ENCODE measurements at regions of chrX and their contacts with region 1.

Region 1: GRCh38 chrX:46376246-46376885 is 168.9 kb downstream of the ZNF674 start:
- DNase-seq: peak; percentile 1
- H3K4me3 Mint-ChIP-seq: no peak overlapping the region
- H3K27ac Mint-ChIP-seq: no peak overlapping the region
- H3K4me1 Mint-ChIP-seq: peaks cover 7% of the 10 kb centered on the region
- H3K27me3 Mint-ChIP-seq: no peaks in the 10 kb centered on the region

Region 2: GRCh38 chrX:45322382-45322781 is 1054.0 kb before region 1 on chrX:
- intact Hi-C with region 1: loop called (anchors 5 kb)
- DNase-seq: no peak
- H3K4me3 Mint-ChIP-seq: no peak overlapping the region
- H3K27ac Mint-ChIP-seq: no peak overlapping the region
- H3K4me1 Mint-ChIP-seq: no peaks in the 10 kb centered on the region
- H3K27me3 Mint-ChIP-seq: peaks cover under 1% of the 10 kb centered on the region

Region 3: DNA sequence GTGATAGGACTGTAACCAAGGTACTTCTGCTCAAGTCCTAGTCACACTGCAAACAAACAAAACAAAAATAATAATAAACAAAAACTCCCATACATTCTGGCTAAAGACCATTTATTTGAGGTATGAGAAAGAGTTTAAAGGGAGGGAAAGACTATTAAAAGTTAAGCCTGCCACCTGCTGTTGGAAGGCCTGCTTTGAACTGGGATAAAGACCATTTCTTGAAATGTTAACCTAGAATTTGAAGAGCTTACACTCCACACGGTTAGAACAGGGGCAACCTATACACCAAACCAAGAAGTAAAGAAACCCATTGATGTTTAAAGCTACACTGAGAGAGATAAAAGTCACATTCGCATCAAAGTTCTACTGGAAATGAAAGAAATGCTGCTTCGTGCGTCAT is 627.0 kb before region 1 on chrX:
- intact Hi-C with region 1: loop called (anchors 2 kb)
- DNase-seq: no peak
- H3K4me3 Mint-ChIP-seq: peak overlapping the region; percentile 42
- H3K27ac Mint-ChIP-seq: peak overlapping the region; percentile 83
- H3K4me1 Mint-ChIP-seq: peaks cover 38% of the 10 kb centered on the region
- H3K27me3 Mint-ChIP-seq: no peaks in the 10 kb centered on the region

Region 4: DNA sequence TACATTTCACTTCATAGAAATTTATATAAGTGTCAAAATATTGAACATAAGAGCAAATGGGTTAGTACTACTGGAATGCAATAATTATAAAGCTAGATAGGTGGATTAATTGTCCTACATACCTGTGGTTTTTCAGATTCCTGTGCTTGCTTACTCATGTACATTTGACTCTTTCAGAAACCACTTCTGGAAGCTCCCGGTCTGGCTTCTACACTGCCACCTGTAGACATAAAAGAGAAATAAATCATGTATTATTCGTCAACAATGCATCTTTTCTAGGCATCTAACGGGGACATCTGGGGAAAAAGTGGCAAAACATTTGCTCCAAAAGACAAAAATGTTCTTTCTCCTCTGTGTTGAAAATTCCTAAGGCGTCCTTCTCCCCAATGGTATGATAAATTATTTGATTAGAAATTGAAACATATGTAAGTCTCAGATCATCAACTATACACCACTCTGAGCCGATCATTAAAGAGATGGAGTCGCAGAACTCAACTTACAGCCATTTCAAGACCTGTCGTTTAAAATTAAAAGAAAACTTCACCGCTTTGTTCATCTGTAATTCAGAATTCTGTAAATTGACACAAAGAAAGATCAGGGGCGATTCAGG is 527.0 kb before region 1 on chrX:
- intact Hi-C with region 1: loop called (anchors 2 kb)
- DNase-seq: no peak
- H3K4me3 Mint-ChIP-seq: peak overlapping the region; percentile 94
- H3K27ac Mint-ChIP-seq: peak overlapping the region; percentile 94
- H3K4me1 Mint-ChIP-seq: peaks cover 34% of the 10 kb centered on the region
- H3K27me3 Mint-ChIP-seq: no peaks in the 10 kb centered on the region

Region 5: DNA sequence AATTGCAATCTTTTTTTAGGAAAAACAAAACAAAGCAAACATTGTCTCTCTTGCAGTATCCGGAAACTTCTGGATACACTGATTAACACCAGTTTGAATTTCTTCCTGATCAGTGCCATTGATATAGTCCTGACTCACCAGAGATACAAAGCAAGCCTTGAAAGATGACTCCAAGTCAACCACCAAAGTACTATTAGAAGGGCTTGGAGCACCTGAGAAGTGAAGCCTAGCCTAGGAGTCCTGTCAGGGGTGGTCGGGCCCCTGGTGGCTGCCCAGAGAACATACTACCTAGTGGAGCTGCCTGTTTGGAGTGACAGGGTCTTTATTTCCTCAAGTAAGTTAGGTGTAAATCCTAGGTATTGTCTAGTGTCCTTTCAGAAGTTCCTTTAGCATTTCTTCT is 424.3 kb before region 1 on chrX:
- intact Hi-C with region 1: no loop called
- DNase-seq: no peak
- H3K4me3 Mint-ChIP-seq: no peak overlapping the region
- H3K27ac Mint-ChIP-seq: no peak overlapping the region
- H3K4me1 Mint-ChIP-seq: no peaks in the 10 kb centered on the region
- H3K27me3 Mint-ChIP-seq: no peaks in the 10 kb centered on the region

Region 6: DNA sequence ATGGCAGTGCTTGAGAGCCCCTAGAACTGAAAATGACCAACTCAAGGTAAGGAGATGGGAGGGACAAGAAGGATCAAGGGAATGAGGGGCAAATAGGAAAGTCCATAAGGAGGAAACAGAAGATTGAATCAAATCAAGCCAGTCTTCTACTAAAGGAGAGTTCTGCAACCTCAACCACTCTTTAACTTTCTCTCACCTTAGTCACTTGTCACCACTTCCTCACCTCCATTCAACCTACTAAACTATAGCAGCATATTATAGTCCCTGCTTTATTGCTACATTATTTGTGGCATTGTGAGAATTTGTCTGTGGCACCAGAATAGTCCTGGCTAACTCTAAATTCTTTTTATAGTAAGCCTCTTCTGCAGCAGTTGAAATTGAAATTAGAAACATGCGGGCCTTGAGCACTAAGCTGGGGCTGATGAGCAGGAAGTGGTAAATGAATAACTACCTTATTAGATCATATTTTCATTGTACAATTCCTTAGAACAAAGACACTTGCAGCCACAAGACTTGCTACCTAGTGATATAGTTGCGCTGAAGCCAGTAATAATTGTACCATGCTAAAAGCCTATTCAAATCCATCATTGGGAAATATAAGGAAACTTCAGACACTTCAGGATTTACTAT is 168.0 kb before region 1 on chrX:
- intact Hi-C with region 1: loop called (anchors 10 kb)
- DNase-seq: no peak
- H3K4me3 Mint-ChIP-seq: no peak overlapping the region
- H3K27ac Mint-ChIP-seq: no peak overlapping the region
- H3K4me1 Mint-ChIP-seq: peaks cover 25% of the 10 kb centered on the region
- H3K27me3 Mint-ChIP-seq: peaks cover 2% of the 10 kb centered on the region

Region 7: DNA sequence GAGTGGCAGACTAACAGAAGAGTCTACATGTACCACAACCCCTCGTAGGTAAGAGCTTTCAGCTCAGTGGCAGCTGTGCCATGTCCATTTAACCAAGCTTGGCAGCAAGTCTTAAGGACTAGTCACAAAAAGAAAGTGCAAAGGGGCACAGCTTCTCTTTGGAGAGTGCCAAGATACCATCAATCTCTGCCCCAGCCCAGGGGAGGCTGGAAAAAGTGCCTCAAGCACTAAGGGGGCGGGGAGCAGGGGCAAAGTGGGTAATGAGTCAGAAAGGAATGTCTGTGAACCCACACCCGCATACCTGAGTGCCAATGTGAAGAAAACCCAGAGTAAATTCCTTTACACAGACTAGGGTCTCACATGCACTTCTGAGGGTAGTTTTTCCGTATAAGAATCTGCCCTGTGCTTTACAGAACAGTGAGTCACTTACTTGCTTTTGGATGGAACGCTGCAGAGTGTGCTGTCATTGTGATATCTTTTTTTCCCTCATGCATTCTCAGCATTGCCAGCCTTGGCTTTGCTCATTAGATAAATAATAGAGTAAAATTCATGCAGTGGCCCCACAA is 51.0 kb before region 1 on chrX:
- intact Hi-C with region 1: loop called (anchors 2 kb)
- DNase-seq: no peak
- H3K4me3 Mint-ChIP-seq: no peak overlapping the region
- H3K27ac Mint-ChIP-seq: peak overlapping the region; percentile 65
- H3K4me1 Mint-ChIP-seq: peaks cover 49% of the 10 kb centered on the region
- H3K27me3 Mint-ChIP-seq: no peaks in the 10 kb centered on the region

Region 8: GRCh38 chrX:46386510-46386909 is 10.1 kb after region 1 on chrX:
- intact Hi-C with region 1: no loop called
- DNase-seq: no peak
- H3K4me3 Mint-ChIP-seq: no peak overlapping the region
- H3K27ac Mint-ChIP-seq: no peak overlapping the region
- H3K4me1 Mint-ChIP-seq: no peaks in the 10 kb centered on the region
- H3K27me3 Mint-ChIP-seq: peaks cover 13% of the 10 kb centered on the region

Measured in activated T-helper 1 cell treated with anti-CD3 and anti-CD28 coated beads, Interleukin-12 subunit alpha, Interleukin-12 subunit beta, Interleukin-2, Interleukin-4 antibody, amounts not matched to agents 30 ng/mL and 10 ng/mL and 1 ng/mL, durations not matched to agents 14 hours and 24 hours and 36 hours (primary cell).